Naive thymus-derived CD4-positive, alpha-beta T cell (primary cell): ENCODE measurements at regions of chr4 and their contacts with region 1.

Region 1: DNA sequence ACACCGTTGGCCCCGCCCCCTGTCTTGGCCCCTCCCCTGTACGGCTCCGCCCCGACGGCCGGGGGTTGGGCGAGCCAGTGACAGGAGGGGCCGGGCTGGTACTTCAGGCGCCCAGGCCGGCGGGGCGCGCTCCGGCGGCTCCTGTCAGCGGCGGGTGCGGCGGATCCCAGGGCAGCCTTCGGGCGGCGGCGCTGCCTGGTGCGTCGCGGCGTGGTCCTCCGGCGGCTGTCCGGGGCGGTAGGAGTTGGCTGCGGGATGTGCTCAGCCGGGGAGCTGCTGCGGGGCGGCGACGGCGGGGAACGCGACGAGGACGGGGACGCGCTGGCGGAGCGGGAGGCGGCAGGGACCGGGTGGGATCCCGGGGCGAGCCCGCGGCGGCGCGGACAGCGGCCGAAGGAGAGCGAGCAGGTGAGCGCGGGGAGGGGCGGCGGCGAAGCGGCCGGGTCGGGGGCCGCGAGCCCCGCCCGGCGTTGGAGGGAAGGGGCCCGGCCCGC is at the start of gene FAM241A:
- DNase-seq: peak; percentile 81 to 92 (median 88)
- ATAC-seq: peak; percentile 98
- H3K4me3 ChIP-seq: peak within 1 kb of the TSS; percentile 89
- H3K4me3 Mint-ChIP-seq: peak within 1 kb of the TSS; percentile 90 to 99 (median 94)
- H3K27ac ChIP-seq: peak within 1 kb of the TSS; percentile 78
- H3K27ac Mint-ChIP-seq: peak within 1 kb of the TSS; percentile 75 to 98 (median 95)
- H3K4me1 ChIP-seq: peaks cover 0 to 12% of the 10 kb centered on the region in 2 donors
- H3K4me1 Mint-ChIP-seq: peaks cover 16 to 44% (median 40%) of the 10 kb centered on the region in 7 donors
- H3K27me3 ChIP-seq: no peaks in the 10 kb centered on the region
- H3K27me3 Mint-ChIP-seq: peaks cover 0 to 5% (median 0%) of the 10 kb centered on the region in 5 donors
- total RNA-seq, gene FAM241A: 1.2 to 2.4 (median 2.0) TPM

Region 2: DNA sequence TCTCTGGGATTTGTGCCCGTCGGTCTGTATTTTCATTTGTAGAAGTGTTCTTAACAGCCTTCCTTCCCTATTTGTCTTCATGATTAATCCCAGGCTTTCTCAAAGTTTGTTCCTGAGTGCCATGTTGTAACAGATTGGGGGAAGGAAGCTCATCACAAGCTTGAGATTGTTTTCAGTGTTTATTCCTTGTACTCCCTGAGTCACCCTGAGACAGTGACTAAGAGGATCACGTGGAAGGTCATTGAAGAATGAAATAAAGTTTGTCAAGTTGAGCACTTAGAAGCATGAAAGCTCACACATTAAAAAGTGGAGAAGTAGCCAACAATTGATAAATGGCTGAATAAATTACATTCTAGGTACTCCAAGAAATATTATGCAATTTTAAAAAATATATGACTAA is 153.6 kb before region 1 on chr4:
- CTCF ChIA-PET with region 1: no interaction called
- POLR2A ChIA-PET with region 1: no interaction called
- intact Hi-C with region 1: no loop called
- DNase-seq: no peak
- ATAC-seq: peak; percentile 61
- H3K4me3 ChIP-seq: no peak overlapping the region
- H3K4me3 Mint-ChIP-seq: no peak overlapping the region
- H3K27ac ChIP-seq: no peak overlapping the region
- H3K27ac Mint-ChIP-seq: no peak overlapping the region
- H3K4me1 ChIP-seq: no peaks in the 10 kb centered on the region
- H3K4me1 Mint-ChIP-seq: no peaks in the 10 kb centered on the region
- H3K27me3 ChIP-seq: no peaks in the 10 kb centered on the region
- H3K27me3 Mint-ChIP-seq: peaks cover 6 to 35% (median 29%) of the 10 kb centered on the region in 5 donors

Region 3: DNA sequence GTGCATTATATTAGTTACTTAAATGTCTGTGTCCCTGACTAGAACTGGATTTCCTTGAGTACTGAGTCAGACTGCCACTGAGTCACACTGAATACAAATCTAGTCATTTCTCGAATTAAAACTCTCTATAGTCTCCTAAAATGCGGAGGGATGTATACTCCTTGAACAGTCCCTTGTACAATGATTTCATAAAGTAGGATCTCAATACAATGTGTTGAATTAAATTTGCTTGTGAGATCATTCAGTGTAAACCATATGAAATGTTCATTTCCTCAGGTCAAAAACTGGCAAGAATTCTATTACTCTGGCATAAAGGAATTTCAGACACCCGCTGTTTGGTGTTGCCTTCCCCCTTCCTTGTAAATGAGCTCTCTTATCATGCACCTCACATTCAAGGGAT is 17.6 kb before region 1 on chr4:
- CTCF ChIA-PET with region 1: no interaction called
- POLR2A ChIA-PET with region 1: no interaction called
- intact Hi-C with region 1: loop called in 1 of 2 experiments (anchors 2 kb)
- DNase-seq: no peak
- ATAC-seq: no peak
- H3K4me3 ChIP-seq: no peak overlapping the region
- H3K4me3 Mint-ChIP-seq: no peak overlapping the region
- H3K27ac ChIP-seq: no peak overlapping the region
- H3K27ac Mint-ChIP-seq: no peak overlapping the region
- H3K4me1 ChIP-seq: no peaks in the 10 kb centered on the region
- H3K4me1 Mint-ChIP-seq: peaks cover 0 to 3% (median 0%) of the 10 kb centered on the region in 7 donors
- H3K27me3 ChIP-seq: no peaks in the 10 kb centered on the region
- H3K27me3 Mint-ChIP-seq: peaks cover 6 to 36% (median 10%) of the 10 kb centered on the region in 5 donors

Region 4: DNA sequence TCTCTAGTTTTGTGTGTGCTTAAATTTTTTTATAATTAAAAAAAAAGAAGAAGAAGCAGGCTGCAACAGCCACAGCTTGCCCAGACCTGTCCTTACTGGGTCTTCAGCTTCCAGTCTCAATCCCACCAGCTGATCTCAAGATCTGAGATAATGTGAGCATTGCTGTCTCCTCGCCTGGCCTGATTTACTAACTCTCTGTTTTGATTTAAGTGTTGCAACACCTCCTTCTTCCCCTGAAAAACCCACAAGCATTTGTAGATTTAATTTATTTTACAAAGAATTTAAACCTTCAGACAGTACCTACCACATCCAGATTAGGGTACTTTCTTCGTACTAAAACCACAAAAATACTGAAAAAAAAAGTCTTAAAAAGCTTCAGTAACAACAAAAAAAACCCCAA is 37.9 kb after region 1 on chr4:
- CTCF ChIA-PET with region 1: no interaction called
- POLR2A ChIA-PET with region 1: interaction called, 5 read pairs
- intact Hi-C with region 1: loop called (anchors 1 to 5 kb)
- DNase-seq: peak in 7 of 9 donors; percentile 19 to 72 (median 55)
- ATAC-seq: peak; percentile 82
- H3K4me3 ChIP-seq: no peak overlapping the region
- H3K4me3 Mint-ChIP-seq: peak overlapping the region in 8 of 10 donors; percentile 23 to 73 (median 67)
- H3K27ac ChIP-seq: peak overlapping the region; percentile 57
- H3K27ac Mint-ChIP-seq: peak overlapping the region in 8 of 9 donors; percentile 3 to 89 (median 28)
- H3K4me1 ChIP-seq: peaks cover 0 to 17% of the 10 kb centered on the region in 2 donors
- H3K4me1 Mint-ChIP-seq: peaks cover 25 to 54% (median 44%) of the 10 kb centered on the region in 7 donors
- H3K27me3 ChIP-seq: no peaks in the 10 kb centered on the region
- H3K27me3 Mint-ChIP-seq: no peaks in the 10 kb centered on the region

Region 5: DNA sequence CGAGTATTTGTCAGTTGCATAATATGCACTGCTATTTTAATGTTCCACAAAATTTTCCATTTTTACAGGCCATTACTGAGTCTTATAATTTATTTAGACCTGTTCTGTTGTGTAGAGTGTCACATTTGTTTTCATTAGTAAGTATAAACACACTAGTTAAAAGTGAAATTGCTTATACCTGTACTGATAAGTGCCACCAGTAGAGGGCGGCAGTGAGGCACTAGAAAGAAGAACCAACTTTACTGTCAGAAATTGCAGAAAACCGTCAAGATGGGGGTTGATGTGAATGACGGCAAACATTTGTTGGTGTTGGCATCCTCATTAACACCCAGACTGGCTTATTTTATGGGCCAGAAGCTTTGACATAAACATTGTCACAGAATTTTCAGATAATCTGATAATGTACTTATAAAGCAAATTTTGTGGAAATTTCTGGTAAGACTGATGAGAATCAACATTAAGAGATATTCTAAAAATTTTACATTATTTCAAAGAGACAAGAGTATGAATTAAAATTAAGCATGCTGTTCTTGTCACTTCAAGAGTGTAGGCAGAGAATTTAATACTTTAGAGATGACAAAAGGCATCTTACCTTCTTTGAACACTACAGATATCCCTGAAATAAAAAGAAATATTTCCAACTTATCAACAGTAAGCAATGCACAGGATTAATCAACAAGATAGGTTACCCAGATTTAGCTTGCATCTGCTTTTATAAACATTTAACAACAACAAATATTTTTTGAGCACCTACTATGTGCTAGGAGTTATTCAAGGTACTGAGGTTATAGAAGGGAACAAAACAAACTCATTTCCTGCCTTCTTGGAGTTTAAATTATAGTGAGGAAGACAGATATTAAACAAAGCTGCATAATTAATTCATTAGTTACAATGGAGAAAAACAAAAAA is 176.7 kb after region 1 on chr4:
- CTCF ChIA-PET with region 1: no interaction called
- POLR2A ChIA-PET with region 1: no interaction called
- intact Hi-C with region 1: loop called in 1 of 2 experiments (anchors 1 kb)
- DNase-seq: peak; percentile 44 to 74 (median 71)
- ATAC-seq: peak; percentile 96
- H3K4me3 ChIP-seq: no peak overlapping the region
- H3K4me3 Mint-ChIP-seq: peak overlapping the region in 7 of 10 donors; percentile 27 to 75 (median 62)
- H3K27ac ChIP-seq: no peak overlapping the region
- H3K27ac Mint-ChIP-seq: peak overlapping the region in 3 of 9 donors; percentile 15 to 59 (median 38)
- H3K4me1 ChIP-seq: no peaks in the 10 kb centered on the region
- H3K4me1 Mint-ChIP-seq: peaks cover 10 to 34% (median 14%) of the 10 kb centered on the region in 7 donors
- H3K27me3 ChIP-seq: no peaks in the 10 kb centered on the region
- H3K27me3 Mint-ChIP-seq: no peaks in the 10 kb centered on the region

Region 6: GRCh38 chr4:113901994-113902787 is 1756.8 kb after region 1 on chr4:
- CTCF ChIA-PET with region 1: no interaction called
- POLR2A ChIA-PET with region 1: no interaction called
- intact Hi-C with region 1: loop called in 1 of 2 experiments (anchors 10 kb)
- DNase-seq: peak; percentile 27 to 86 (median 72)
- ATAC-seq: peak; percentile 88
- H3K4me3 ChIP-seq: peak overlapping the region; percentile 7
- H3K4me3 Mint-ChIP-seq: peak overlapping the region; percentile 32 to 78 (median 70)
- H3K27ac ChIP-seq: peak overlapping the region; percentile 65
- H3K27ac Mint-ChIP-seq: peak overlapping the region; percentile 74 to 99 (median 96)
- H3K4me1 ChIP-seq: peaks cover 65 to 72% of the 10 kb centered on the region in 2 donors
- H3K4me1 Mint-ChIP-seq: peaks cover 23 to 87% (median 82%) of the 10 kb centered on the region in 7 donors
- H3K27me3 ChIP-seq: no peaks in the 10 kb centered on the region
- H3K27me3 Mint-ChIP-seq: no peaks in the 10 kb centered on the region